PC-3 (cell line): ENCODE measurements at regions of chr11 and their contacts with region 1.

Region 1: DNA sequence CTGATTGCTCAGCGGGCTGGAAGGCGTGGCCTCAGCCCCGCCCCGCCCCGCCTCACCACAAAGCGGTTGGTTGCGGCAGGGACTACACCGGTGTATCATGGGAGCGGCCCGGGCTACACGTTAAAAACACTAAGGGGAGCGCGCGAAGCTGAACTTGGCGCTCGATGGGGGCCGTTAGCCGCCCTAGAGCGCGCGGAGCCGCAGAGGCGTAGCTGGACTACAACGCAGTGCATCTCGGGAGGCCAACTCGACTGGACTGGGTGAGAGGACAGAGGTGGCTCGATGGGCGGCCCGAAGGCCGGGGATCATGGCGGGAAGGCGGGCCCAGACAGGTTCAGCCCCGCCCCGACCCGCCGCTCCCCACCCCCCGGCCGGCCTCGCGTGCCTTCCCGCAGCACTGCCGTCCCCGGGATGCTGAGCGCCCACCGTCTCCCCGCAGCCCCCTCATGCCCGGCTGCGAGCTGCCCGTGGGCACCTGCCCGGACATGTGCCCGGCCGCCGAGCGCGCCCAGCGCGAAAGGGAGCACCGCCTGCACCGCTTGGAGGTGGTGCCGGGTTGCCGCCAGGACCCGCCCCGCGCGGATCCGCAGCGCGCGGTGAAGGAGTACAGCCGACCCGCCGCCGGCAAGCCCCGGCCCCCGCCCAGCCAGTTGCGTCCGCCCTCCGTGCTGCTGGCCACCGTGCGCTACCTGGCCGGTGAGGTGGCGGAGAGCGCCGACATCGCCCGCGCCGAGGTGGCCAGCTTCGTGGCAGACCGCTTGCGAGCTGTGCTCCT is at the start of gene SAC3D1:
- DNase-seq: peak; percentile 99
- ATAC-seq: peak; percentile 89
- H3K4me3 ChIP-seq: peak within 1 kb of the TSS; percentile 97
- H3K27ac ChIP-seq: peak within 1 kb of the TSS; percentile 87
- H3K4me1 ChIP-seq: peaks cover 35% of the 10 kb centered on the region
- H3K27me3 ChIP-seq: no peaks in the 10 kb centered on the region
- CTCF ChIP-seq: no peak
- total RNA-seq, gene SAC3D1: 61.0 and 82.0 TPM in 2 replicates

Region 2: GRCh38 chr11:64900263-64900678 is 140.8 kb before region 1 on chr11:
- CTCF ChIA-PET with region 1: no interaction called
- POLR2A ChIA-PET with region 1: interaction called, 19 read pairs
- intact Hi-C with region 1: no loop called
- DNase-seq: peak; percentile 59
- ATAC-seq: peak; percentile 71
- H3K4me3 ChIP-seq: no peak overlapping the region
- H3K27ac ChIP-seq: peak overlapping the region; percentile 21; the same call in 1 of the 2 replicates
- H3K4me1 ChIP-seq: peaks cover 7% of the 10 kb centered on the region; the same call in 1 of the 2 replicates
- H3K27me3 ChIP-seq: no peaks in the 10 kb centered on the region
- CTCF ChIP-seq: no peak

Region 3: GRCh38 chr11:65027213-65028067 is 13.6 kb before region 1 on chr11 and contains the start of gene SNX15:
- CTCF ChIA-PET with region 1: no interaction called
- POLR2A ChIA-PET with region 1: no interaction called
- intact Hi-C with region 1: loop called (anchors 1 kb)
- DNase-seq: peak; percentile 99
- ATAC-seq: peak; percentile 95
- H3K4me3 ChIP-seq: peak within 1 kb of the TSS; percentile 67
- H3K27ac ChIP-seq: peak within 1 kb of the TSS; percentile 66
- H3K4me1 ChIP-seq: peaks cover 10% of the 10 kb centered on the region
- H3K27me3 ChIP-seq: no peaks in the 10 kb centered on the region
- CTCF ChIP-seq: peak; percentile 56
- total RNA-seq, gene SNX15: 15.1 and 40.4 TPM in 2 replicates

Region 4: GRCh38 chr11:65083834-65084597 is 43.0 kb after region 1 on chr11 and contains the starts of genes CDCA5 and ZFPL1:
- CTCF ChIA-PET with region 1: no interaction called
- POLR2A ChIA-PET with region 1: no interaction called
- intact Hi-C with region 1: loop called (anchors 2 kb)
- DNase-seq: peak; percentile 98
- ATAC-seq: peak; percentile 92
- H3K4me3 ChIP-seq: peak within 1 kb of the TSS; percentile 89
- H3K27ac ChIP-seq: peak within 1 kb of the TSS; percentile 63
- H3K4me1 ChIP-seq: peaks cover 21% of the 10 kb centered on the region
- H3K27me3 ChIP-seq: no peaks in the 10 kb centered on the region
- CTCF ChIP-seq: no peak
- total RNA-seq, gene CDCA5: 67.1 and 73.4 TPM in 2 replicates
- total RNA-seq, gene ZFPL1: 98.7 and 103 TPM in 2 replicates